ENCODE measurements at regions of chr3 and their contacts with region 1.

Region 1: DNA sequence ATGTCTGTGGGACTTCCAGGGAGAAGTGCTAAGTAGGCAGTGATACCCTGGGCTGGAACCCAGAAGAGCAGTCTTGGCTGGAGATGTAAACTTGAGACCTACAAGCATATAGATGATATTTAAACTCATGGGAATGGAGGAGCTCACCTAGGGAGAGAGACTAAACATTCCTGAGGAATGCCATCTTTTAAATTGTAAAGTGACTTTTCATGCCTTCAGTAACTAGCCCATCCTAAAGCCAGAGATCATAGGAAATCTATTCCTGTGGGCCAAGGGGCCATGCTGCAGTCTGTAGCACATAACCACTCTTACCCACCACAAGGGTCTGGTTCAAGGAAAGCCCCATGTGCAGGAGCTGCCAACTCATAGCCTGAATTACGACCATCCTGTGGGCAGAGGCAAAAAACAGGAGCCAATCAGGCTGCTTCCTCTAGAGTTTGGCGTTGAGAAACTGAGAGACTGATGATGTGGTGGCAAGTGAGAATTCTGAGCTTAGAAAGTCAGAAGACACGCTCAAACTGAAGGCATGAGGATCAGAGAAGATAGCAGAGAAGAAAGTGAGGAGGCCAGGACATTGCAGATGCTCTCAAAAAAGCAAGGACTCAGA is 37.5 kb downstream of the CTDSPL start:
- DNase-seq: no peak
- H3K4me3 Mint-ChIP-seq: no peak overlapping the region
- H3K27ac Mint-ChIP-seq: peak overlapping the region; percentile 22
- H3K4me1 Mint-ChIP-seq: peaks cover 52% of the 10 kb centered on the region
- H3K27me3 Mint-ChIP-seq: no peaks in the 10 kb centered on the region

Region 2: GRCh38 chr3:37680401-37680800 is 218.8 kb before region 1 on chr3:
- intact Hi-C with region 1: no loop called
- DNase-seq: no peak
- H3K4me3 Mint-ChIP-seq: no peak overlapping the region
- H3K27ac Mint-ChIP-seq: no peak overlapping the region
- H3K4me1 Mint-ChIP-seq: no peaks in the 10 kb centered on the region
- H3K27me3 Mint-ChIP-seq: peaks cover 5% of the 10 kb centered on the region

Region 3: GRCh38 chr3:37852097-37852496 is 47.1 kb before region 1 on chr3:
- intact Hi-C with region 1: no loop called
- DNase-seq: no peak
- H3K4me3 Mint-ChIP-seq: no peak overlapping the region
- H3K27ac Mint-ChIP-seq: no peak overlapping the region
- H3K4me1 Mint-ChIP-seq: peaks cover 2% of the 10 kb centered on the region
- H3K27me3 Mint-ChIP-seq: no peaks in the 10 kb centered on the region

Region 4: DNA sequence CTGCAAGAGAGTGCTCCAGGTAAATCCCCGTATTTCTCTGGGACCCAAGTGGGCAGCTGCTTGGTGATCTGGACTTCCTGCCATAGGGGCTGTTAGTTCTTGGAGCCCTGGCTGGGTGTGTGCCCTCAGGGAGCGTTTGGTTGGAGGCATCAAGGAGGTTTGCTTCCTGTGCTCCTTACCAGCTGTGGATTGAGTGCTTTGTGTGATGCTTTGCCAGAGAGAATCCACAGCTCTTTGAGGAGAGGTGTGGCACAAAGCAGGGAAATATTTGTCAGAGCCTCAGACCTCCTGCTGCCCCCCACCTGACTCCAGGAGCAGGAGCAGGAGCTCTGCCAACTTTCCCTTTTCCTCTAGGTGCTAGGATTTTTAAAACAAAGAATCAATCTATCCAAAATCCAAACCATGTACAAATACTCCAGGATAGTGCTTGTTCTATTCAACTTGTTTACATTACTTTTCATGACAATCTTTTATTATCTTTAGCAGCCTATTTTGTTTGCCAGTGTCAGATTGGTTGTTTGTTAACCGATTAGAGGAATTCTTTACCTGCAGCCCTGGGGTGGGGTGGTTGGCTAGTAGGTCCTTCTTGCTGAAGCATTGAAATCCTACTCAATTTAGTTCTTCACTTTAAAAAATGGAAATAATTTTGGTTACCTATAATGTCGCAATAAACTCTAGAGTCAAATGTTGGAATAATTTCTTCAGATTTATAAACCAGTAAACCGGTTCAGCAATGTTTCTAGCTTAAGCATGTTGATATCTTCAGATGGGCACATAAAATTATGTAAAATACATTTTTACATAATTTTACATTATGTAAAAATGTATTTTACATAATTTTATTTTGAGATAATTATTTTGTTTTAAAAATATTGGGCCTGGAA is 35.0 kb before region 1 on chr3:
- intact Hi-C with region 1: loop called (anchors 1 kb)
- DNase-seq: no peak
- H3K4me3 Mint-ChIP-seq: no peak overlapping the region
- H3K27ac Mint-ChIP-seq: no peak overlapping the region
- H3K4me1 Mint-ChIP-seq: peaks cover 27% of the 10 kb centered on the region
- H3K27me3 Mint-ChIP-seq: peaks cover 29% of the 10 kb centered on the region